Activated CD4-positive, alpha-beta T cell treated with anti-CD3 and anti-CD28 coated beads, Interleukin-2, amount 10 ng/mL, durations not matched to agents 24 days and 14 days (primary cell): ENCODE measurements at regions of chr10 and their contacts with region 1.

Region 1: DNA sequence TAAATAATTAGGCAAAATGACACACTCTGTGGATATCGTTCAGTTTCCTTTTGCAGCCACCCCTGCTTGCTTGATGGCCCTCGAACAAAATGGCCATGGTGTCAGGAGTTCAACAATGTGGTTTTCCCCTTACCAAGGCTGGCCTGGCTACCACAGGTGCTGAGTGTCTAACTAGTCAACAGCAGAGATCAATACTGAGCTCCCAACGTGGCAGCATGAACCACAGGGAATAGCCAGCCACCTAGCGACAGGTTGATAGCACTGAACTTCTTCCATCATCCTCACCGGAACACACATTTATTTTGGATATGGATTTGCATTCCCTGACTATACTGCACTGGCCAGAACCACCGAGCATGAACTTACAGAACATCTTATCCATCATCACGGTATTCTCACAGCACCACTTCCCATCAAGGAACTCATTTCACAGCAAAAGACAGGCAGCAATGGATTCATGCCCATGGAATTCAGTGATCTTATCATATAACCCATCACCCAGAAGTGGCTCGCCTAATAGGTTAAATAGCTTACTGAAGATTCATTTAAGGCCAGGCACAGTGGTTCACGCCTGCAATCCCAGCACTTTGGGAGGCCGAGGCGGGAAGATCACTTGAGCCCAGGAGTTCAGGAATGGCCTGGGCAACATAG is 6.3 kb downstream of the C10orf67 start:
- DNase-seq: no peak
- H3K4me3 Mint-ChIP-seq: no peak overlapping the region
- H3K27ac Mint-ChIP-seq: no peak overlapping the region
- H3K4me1 Mint-ChIP-seq: peaks cover 51% of the 10 kb centered on the region
- H3K27me3 Mint-ChIP-seq: no peaks in the 10 kb centered on the region

Region 2: DNA sequence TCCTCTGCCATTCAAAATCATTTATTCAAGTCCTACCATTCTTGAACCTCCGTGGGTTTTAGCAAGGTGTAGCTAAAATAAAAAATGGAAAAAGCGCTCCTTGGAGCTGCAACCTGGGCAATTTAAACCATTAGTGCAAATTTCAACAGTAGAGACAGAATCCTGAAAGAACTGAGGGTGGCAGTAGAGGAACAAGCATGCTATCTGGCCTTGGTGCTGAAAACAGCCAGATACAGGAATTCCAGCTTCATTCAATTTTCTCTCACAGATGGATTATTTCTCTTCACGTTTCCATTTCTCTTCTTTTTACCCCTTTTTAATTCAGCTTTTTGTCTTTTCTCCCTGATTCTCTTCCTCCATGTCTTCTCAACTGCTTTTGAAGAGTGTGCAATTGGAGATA is 178.2 kb after region 1 on chr10:
- intact Hi-C with region 1: loop called (anchors 5 kb)
- DNase-seq: peak; percentile 55
- H3K4me3 Mint-ChIP-seq: no peak overlapping the region
- H3K27ac Mint-ChIP-seq: no peak overlapping the region
- H3K4me1 Mint-ChIP-seq: peaks cover 14% of the 10 kb centered on the region
- H3K27me3 Mint-ChIP-seq: peaks cover 10% of the 10 kb centered on the region